Activated CD4-positive, alpha-beta memory T cell treated with anti-CD3 and anti-CD28 coated beads for 36 hours (primary cell): ENCODE measurements at regions of chr2 and their contacts with region 1.

Region 1: GRCh38 chr2:230824406-230824978 is 40.2 kb upstream of the ITM2C start:
- DNase-seq: peak; percentile 58
- H3K4me3 Mint-ChIP-seq: no peak overlapping the region
- H3K27ac Mint-ChIP-seq: no peak overlapping the region
- H3K4me1 Mint-ChIP-seq: peaks cover 9% of the 10 kb centered on the region
- H3K27me3 Mint-ChIP-seq: peaks cover 32% of the 10 kb centered on the region

Region 2: GRCh38 chr2:230840301-230840700 is 15.8 kb after region 1 on chr2:
- CTCF ChIA-PET with region 1: interaction called, 19 read pairs
- POLR2A ChIA-PET with region 1: no interaction called
- intact Hi-C with region 1: no loop called
- DNase-seq: no peak
- H3K4me3 Mint-ChIP-seq: no peak overlapping the region
- H3K27ac Mint-ChIP-seq: no peak overlapping the region
- H3K4me1 Mint-ChIP-seq: peaks cover 6% of the 10 kb centered on the region
- H3K27me3 Mint-ChIP-seq: peaks cover 15% of the 10 kb centered on the region

Region 3: DNA sequence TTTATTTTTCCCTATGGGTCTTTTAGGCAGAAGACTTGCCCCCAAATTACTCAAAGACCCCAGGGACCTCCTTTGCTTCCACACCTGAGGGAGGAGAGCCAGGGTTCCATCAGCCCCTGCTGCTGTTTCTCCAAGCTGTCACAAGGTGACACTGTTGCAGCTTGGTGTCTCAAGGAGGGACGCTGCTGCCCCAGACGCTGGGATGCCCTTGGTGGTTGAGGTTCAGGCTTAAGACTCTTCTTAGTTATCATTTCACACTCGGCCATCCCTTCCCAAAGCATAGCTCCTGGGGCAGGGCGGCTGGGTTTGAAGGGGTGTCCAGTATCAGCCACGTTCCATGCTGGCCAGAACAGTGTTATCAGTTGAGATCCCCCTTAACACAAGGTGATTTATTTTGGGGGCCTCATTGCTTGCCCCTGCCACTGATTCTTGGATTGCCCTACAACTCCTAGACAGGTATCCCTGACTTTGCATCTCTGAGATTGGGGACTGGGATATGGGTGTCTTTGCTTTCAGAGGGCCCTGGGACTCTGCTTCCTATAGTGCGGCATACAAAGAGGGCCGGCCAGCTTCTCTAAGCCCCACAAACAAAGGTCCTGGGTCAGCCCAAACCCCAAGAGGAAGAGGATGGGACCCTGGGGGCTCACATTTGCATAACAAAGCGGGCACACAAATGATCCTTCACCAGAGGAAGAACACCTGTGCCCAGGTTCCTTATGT is 77.8 kb after region 1 on chr2:
- CTCF ChIA-PET with region 1: interaction called, 13 read pairs
- POLR2A ChIA-PET with region 1: no interaction called
- intact Hi-C with region 1: no loop called
- DNase-seq: peak; percentile 72
- H3K4me3 Mint-ChIP-seq: no peak overlapping the region
- H3K27ac Mint-ChIP-seq: no peak overlapping the region
- H3K4me1 Mint-ChIP-seq: peaks cover 49% of the 10 kb centered on the region
- H3K27me3 Mint-ChIP-seq: peaks cover 21% of the 10 kb centered on the region

Region 4: DNA sequence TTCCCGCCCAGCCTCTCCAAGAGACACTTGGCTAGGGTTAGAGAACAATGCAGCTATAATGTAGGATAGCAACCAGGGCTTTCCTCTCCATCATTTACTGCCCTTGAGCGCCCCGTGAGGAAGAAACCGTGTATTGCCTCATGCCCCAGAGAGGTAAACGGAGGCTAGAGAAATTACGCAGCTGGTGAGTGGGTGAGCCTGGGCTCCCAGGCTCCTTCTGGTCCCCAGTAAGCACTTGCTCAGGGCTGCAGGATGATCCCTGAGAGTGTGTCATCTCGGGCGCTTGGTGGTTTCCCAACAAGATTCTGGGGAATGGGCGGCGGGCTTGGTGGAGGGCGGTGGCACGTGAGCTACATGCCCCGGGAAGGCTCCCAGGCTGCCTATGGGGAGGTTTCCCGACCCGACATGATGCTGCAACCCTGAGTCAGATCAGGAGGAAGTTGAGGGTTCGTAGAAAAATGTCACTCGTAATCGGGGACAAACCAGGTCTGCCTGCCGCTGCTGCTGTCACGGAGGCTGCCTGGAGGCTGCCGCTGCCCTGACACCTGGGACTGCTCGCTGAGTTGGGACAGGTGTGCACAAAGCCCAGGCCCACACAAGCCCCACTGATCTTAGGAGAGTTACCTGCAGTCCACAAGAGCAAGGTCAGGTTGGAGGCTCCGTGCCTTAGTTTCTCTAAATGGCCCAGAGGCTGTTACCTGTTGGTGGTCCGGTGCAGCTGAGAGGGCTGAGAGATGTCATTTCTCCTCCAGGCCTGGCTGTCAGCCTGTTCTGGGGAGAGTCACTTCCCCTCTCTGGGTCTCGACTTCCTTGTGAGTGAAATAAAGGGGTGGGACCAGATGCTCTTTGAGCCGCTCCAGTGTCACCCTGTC is 100.2 kb after region 1 on chr2 and contains the start of gene GPR55:
- CTCF ChIA-PET with region 1: interaction called, 13 read pairs
- POLR2A ChIA-PET with region 1: no interaction called
- intact Hi-C with region 1: no loop called
- DNase-seq: peak; percentile 90
- H3K4me3 Mint-ChIP-seq: peak within 1 kb of the TSS; percentile 74
- H3K27ac Mint-ChIP-seq: peak within 1 kb of the TSS; percentile 91
- H3K4me1 Mint-ChIP-seq: peaks cover 58% of the 10 kb centered on the region
- H3K27me3 Mint-ChIP-seq: peaks cover 11% of the 10 kb centered on the region
- total RNA-seq, gene GPR55: 1.5 to 1.6 TPM

Region 5: DNA sequence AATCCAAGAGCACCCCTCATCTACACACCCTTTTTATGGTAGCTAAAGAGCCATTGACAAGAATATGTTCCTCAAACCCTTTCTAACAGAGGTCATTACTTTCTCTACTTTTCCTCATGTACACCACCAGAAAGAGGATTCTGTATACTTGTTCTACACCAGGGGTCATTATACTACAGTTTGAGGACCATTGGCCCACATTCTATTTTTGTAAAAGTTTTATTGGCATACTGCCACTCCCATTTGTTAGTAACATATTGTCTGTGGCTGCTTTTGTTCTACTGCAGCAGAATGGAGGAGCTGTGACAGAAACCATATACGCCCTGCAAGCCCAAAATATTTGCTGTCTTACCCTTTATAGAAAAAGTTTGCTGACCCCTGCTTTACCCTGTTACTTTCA is 286.1 kb after region 1 on chr2:
- CTCF ChIA-PET with region 1: no interaction called
- POLR2A ChIA-PET with region 1: no interaction called
- intact Hi-C with region 1: no loop called
- DNase-seq: no peak
- H3K4me3 Mint-ChIP-seq: no peak overlapping the region
- H3K27ac Mint-ChIP-seq: no peak overlapping the region
- H3K4me1 Mint-ChIP-seq: no peaks in the 10 kb centered on the region
- H3K27me3 Mint-ChIP-seq: no peaks in the 10 kb centered on the region

Region 6: GRCh38 chr2:232075080-232075479 is 1250.6 kb after region 1 on chr2:
- CTCF ChIA-PET with region 1: no interaction called
- POLR2A ChIA-PET with region 1: no interaction called
- intact Hi-C with region 1: no loop called
- DNase-seq: no peak
- H3K4me3 Mint-ChIP-seq: no peak overlapping the region
- H3K27ac Mint-ChIP-seq: no peak overlapping the region
- H3K4me1 Mint-ChIP-seq: peaks cover 21% of the 10 kb centered on the region
- H3K27me3 Mint-ChIP-seq: no peaks in the 10 kb centered on the region